ENCODE measurements at regions of chr19 and their contacts with region 1.

Region 1: DNA sequence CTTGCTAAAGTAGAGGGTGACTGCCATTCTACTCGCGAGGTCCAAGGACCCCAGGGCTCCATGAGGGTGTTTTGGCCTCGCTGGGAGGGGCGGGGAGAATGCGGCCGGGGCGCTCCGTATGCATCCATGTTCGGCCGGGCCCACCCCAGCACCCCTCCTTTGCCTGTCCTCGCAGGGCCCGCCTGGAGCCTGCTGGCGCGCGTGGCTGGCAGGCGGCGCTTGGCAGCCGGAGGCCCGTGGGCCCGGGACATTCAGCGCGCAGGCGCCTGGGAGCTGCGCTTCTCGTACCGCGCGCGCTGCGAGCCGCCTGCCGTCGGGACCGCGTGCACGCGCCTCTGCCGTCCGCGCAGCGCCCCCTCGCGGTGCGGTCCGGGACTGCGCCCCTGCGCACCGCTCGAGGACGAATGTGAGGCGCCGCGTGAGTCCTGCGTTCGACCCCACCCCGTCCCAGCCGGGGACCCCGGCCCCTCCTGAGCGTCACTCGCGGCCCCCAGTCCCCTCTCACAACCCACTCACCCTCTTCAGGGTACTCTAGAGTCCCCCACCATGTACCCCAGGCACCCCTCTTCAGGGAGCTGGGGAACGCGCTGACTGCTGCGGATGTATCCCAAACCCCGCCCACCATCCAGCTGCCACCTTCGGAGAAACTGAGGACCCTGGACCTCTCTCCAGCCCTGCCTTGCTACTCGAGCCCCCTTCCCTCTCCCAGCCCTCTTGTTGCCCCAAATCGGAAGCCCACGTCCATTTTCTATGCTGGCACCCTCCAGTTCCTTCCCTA is 4.1 kb downstream of the DLL3 start:
- DNase-seq: peak; percentile 81
- ATAC-seq: peak; percentile 62
- H3K4me3 Mint-ChIP-seq: no peak overlapping the region
- H3K27ac Mint-ChIP-seq: no peak overlapping the region
- H3K4me1 Mint-ChIP-seq: peaks cover 41% of the 10 kb centered on the region
- H3K27me3 Mint-ChIP-seq: peaks cover 46% of the 10 kb centered on the region
- CTCF ChIP-seq: no peak

Region 2: GRCh38 chr19:39480337-39481228 is 22.2 kb before region 1 on chr19 and contains the start of gene TIMM50:
- CTCF ChIA-PET with region 1: interaction called, 4 read pairs
- POLR2A ChIA-PET with region 1: interaction called, 7 read pairs
- intact Hi-C with region 1: loop called (anchors 2 kb)
- DNase-seq: peak; percentile 98
- ATAC-seq: peak; percentile 99
- H3K4me3 Mint-ChIP-seq: peak within 1 kb of the TSS; percentile 91
- H3K27ac Mint-ChIP-seq: peak within 1 kb of the TSS; percentile 85
- H3K4me1 Mint-ChIP-seq: peaks cover 25% of the 10 kb centered on the region
- H3K27me3 Mint-ChIP-seq: no peaks in the 10 kb centered on the region
- CTCF ChIP-seq: no peak
- total RNA-seq, gene TIMM50: 63.8 and 68.9 TPM in 2 replicates

Region 3: GRCh38 chr19:39576511-39576910 is 73.7 kb after region 1 on chr19:
- CTCF ChIA-PET with region 1: no interaction called
- POLR2A ChIA-PET with region 1: no interaction called
- intact Hi-C with region 1: no loop called
- DNase-seq: no peak
- ATAC-seq: no peak
- H3K4me3 Mint-ChIP-seq: no peak overlapping the region
- H3K27ac Mint-ChIP-seq: no peak overlapping the region
- H3K4me1 Mint-ChIP-seq: no peaks in the 10 kb centered on the region
- H3K27me3 Mint-ChIP-seq: peaks cover 56% of the 10 kb centered on the region
- CTCF ChIP-seq: no peak

Region 4: DNA sequence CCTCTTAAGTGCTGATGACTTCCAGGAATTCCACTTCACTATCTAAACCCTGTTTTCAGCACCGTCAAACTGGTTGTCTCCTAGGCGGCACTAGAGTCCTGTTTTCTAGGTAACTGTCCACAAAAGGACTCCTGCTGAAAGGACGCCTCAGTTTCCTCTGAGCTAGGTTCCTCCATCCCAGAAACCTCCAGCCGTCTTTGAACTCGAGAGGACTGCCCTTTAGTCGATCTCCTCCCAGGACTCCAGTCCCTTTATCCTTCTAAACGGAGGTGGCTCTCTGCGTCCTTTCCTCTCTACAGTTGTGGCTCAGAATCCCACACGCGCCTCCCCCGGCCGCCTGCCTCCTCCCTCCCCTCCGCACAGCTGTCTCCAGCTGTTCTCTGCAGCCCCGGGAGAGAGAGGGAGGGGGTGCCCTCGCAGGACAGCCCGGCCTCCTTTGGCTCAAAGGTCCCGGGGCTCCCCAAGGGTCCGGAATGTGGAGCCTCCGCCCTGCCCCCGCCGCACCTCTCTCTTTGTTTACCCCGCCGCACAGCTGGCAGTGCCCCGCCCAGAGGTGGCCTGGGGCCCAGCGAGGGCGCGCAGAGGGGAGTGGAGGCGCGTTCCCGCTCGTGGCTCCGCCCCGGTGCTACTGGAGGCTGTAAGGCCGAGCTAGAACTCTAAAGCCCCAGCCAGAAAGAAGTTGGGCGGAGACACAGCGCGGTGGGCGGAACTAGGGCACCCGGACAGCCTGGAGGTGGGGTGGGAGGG is 1100.7 kb after region 1 on chr19:
- CTCF ChIA-PET with region 1: no interaction called
- POLR2A ChIA-PET with region 1: no interaction called
- intact Hi-C with region 1: loop called (anchors 10 kb)
- DNase-seq: peak; percentile 90
- ATAC-seq: peak; percentile 72
- H3K4me3 Mint-ChIP-seq: peak overlapping the region; percentile 85
- H3K27ac Mint-ChIP-seq: peak overlapping the region; percentile 77
- H3K4me1 Mint-ChIP-seq: peaks cover 69% of the 10 kb centered on the region
- H3K27me3 Mint-ChIP-seq: peaks cover 22% of the 10 kb centered on the region
- CTCF ChIP-seq: no peak

Measured in activated B cell treated with CpG ODN at 0.5 μM for 24 hours (primary cell).